ENCODE measurements at regions of chr16 and their contacts with region 1.

Region 1: DNA sequence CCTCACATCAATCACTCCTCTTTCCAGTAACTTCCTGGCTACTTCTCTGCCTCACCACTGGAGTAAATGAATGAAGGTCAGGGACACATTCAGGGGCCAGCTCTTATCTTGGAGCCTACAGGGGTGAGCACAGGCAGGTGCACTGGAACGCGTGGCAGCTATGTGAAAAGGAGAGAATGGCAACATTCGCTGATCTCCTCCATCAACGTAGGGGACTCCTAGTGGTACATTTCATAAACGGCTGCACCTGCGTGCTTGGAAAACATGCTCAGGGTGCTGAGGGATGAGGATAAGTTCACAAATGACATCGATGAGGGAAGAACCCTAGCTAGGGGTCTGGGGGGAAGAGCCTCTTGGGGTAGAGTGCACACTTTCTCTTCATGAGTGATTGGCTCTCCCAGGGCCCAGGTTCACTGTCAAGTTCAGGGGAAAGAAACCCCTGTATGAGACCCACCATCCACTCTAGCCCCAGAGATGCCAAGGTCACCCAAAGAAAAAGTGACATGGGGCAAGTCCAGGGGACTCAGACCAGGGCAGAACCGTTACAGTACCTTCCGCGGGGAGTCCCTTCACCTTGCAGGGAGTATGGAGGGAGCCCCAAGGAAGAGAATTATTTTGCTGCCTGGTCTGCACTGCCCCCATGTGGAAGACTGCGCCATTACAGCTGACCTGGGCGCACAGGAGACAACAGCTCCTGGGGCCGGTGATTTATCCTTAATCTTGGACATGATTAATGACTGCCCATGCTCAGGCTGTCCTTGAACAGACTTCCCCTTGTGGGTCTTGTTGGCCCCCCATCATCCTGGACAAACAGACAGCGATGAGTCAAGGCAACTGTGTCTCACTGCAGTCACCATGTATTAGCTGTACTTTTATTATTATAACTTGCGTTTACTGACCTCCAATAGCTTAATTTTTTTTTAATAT is 30.1 kb downstream of the VAC14 start:
- DNase-seq: peak; percentile 72
- ATAC-seq: peak; percentile 85
- H3K4me3 Mint-ChIP-seq: no peak overlapping the region
- H3K27ac Mint-ChIP-seq: no peak overlapping the region
- H3K4me1 Mint-ChIP-seq: peaks cover 2% of the 10 kb centered on the region
- H3K27me3 Mint-ChIP-seq: no peaks in the 10 kb centered on the region

Region 2: DNA sequence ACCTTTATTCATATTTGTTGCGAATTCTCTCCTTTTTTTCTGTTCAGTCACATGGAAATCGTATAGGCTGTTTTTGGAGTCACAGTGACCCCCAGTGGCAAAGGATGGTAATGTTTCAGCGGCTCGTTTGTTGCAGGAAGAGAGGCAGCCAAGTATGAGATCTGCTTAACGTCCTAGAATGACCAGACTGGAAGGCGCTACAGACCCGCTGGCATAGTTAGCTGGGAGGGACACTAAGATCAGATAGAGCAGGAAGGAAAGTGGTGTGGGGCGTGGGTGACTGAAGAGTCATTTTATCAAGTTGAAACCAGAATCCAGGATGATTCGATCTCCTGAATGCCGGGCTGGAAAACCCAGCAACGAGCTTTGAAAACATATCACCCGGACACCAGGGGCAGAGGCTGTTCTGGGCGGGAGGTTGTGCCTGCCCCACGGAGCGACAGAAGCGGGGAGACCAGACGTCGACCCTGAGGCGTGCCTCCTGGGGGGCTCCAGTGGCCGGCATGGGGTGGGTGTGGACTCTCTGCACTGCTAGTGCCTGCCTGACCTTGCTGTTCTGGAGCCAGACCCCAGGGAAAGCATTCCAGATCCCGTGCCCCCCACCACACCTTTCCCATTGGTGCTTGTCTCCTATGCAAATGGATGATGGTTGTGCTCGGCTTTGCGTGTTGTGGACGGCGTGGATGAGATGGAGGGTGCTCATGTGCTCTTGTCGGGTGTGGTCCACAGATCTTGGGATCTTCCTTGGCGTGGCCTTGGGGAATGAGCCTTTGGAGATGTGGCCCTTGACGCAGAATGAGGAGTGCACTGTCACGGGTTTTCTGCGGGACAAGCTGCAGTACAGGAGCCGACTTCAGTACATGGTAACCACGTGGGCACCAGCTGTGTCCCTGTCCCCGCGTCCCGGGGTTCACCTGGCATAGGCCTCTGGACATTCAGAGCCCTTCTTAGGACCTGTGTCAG is 116.8 kb before region 1 on chr16:
- CTCF ChIA-PET with region 1: interaction called, 13 read pairs
- DNase-seq: peak; percentile 88
- ATAC-seq: peak; percentile 78
- H3K4me3 Mint-ChIP-seq: peak overlapping the region; percentile 35
- H3K27ac Mint-ChIP-seq: peak overlapping the region; percentile 24
- H3K4me1 Mint-ChIP-seq: peaks cover 8% of the 10 kb centered on the region
- H3K27me3 Mint-ChIP-seq: no peaks in the 10 kb centered on the region

Region 3: GRCh38 chr16:70660672-70661350 is 110.1 kb before region 1 on chr16:
- CTCF ChIA-PET with region 1: interaction called, 13 read pairs
- DNase-seq: no peak
- ATAC-seq: peak; percentile 40
- H3K4me3 Mint-ChIP-seq: no peak overlapping the region
- H3K27ac Mint-ChIP-seq: no peak overlapping the region
- H3K4me1 Mint-ChIP-seq: peaks cover 4% of the 10 kb centered on the region
- H3K27me3 Mint-ChIP-seq: no peaks in the 10 kb centered on the region

Region 4: GRCh38 chr16:70679666-70680494 is 91.0 kb before region 1 on chr16:
- CTCF ChIA-PET with region 1: interaction called, 54 read pairs
- DNase-seq: no peak
- ATAC-seq: no peak
- H3K4me3 Mint-ChIP-seq: no peak overlapping the region
- H3K27ac Mint-ChIP-seq: no peak overlapping the region
- H3K4me1 Mint-ChIP-seq: peaks cover 9% of the 10 kb centered on the region
- H3K27me3 Mint-ChIP-seq: peaks cover 16% of the 10 kb centered on the region

Region 5: GRCh38 chr16:70695331-70696070 is 75.4 kb before region 1 on chr16:
- CTCF ChIA-PET with region 1: interaction called, 23 read pairs
- DNase-seq: peak; percentile 71
- ATAC-seq: peak; percentile 70
- H3K4me3 Mint-ChIP-seq: no peak overlapping the region
- H3K27ac Mint-ChIP-seq: peak overlapping the region; percentile 72
- H3K4me1 Mint-ChIP-seq: peaks cover 28% of the 10 kb centered on the region
- H3K27me3 Mint-ChIP-seq: no peaks in the 10 kb centered on the region

Region 6: DNA sequence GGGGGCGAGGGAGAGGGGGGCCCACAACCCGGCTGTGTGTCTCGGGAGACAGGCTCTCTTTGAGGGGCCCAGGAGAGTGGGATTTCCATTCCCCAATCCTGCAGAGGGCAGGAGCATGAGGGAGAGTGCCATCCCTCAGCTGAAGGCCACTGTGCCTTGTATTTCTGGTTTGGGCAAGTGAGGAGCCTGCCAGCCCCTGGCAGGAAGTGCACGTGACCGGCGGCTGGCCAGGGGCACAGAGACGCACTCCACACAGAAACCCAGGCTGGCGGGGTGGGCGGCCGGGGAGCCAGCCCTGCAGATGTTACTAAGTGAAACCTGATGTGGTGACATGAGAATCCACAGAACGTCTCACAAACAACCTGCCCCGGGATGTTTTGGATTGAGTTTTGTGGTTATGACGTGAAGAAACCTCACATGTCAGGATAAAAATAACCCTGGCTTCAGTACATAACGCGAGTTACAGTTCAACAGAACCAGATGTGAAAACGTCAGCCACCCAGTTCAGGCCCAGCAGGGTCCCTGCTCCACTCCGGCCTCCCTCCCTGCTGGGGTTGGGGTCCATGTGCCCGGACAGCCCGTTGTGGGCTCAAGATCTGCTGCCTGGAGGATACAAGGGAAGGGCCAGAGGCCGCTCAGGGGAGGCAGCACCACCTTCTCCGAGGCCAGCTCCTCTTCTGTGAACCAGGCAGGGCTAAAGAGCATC is 33.4 kb before region 1 on chr16:
- CTCF ChIA-PET with region 1: interaction called, 27 read pairs
- DNase-seq: peak; percentile 93
- ATAC-seq: peak; percentile 87
- H3K4me3 Mint-ChIP-seq: peak overlapping the region; percentile 55
- H3K27ac Mint-ChIP-seq: peak overlapping the region; percentile 96
- H3K4me1 Mint-ChIP-seq: peaks cover 43% of the 10 kb centered on the region
- H3K27me3 Mint-ChIP-seq: no peaks in the 10 kb centered on the region

Region 7: DNA sequence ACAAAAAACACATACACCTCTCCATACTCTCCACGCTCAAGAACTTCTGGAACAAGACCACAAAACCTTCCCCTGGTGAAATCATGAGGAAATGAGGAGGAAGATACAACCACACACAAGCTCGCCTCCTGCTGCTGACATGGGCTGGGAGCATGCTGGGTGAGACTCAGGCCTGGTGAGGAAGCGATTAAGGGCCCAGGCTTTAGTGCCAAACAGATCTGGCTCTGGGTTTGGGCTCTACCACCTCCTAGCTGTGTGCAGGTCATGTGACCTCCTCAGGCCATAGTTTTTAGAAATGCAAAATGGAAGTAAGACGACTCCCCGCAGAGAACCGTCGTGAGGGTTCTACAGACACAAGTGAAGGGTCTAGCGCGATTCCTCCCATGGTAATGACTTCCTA is 11.2 kb before region 1 on chr16:
- CTCF ChIA-PET with region 1: interaction called, 27 read pairs
- DNase-seq: no peak
- ATAC-seq: no peak
- H3K4me3 Mint-ChIP-seq: no peak overlapping the region
- H3K27ac Mint-ChIP-seq: no peak overlapping the region
- H3K4me1 Mint-ChIP-seq: no peaks in the 10 kb centered on the region
- H3K27me3 Mint-ChIP-seq: no peaks in the 10 kb centered on the region